Activated T-helper 2 cell treated with anti-CD3 and anti-CD28 coated beads, Interferon-gamma antibody, Interleukin-2, Interleukin-4, amounts not matched to agents 10 μg/mL and 5 μg/mL and 100 μg/mL, durations not matched to agents 14 hours and 24 hours and 36 hours (primary cell): ENCODE measurements at regions of chr2 and their contacts with region 1.

Region 1: GRCh38 chr2:95345566-95346230 is 48.6 kb downstream of the KCNIP3 start:
- DNase-seq: peak; percentile 49
- H3K4me3 Mint-ChIP-seq: peak overlapping the region; percentile 78
- H3K27ac Mint-ChIP-seq: no peak overlapping the region
- H3K4me1 Mint-ChIP-seq: no peaks in the 10 kb centered on the region
- H3K27me3 Mint-ChIP-seq: peaks cover 39% of the 10 kb centered on the region

Region 2: DNA sequence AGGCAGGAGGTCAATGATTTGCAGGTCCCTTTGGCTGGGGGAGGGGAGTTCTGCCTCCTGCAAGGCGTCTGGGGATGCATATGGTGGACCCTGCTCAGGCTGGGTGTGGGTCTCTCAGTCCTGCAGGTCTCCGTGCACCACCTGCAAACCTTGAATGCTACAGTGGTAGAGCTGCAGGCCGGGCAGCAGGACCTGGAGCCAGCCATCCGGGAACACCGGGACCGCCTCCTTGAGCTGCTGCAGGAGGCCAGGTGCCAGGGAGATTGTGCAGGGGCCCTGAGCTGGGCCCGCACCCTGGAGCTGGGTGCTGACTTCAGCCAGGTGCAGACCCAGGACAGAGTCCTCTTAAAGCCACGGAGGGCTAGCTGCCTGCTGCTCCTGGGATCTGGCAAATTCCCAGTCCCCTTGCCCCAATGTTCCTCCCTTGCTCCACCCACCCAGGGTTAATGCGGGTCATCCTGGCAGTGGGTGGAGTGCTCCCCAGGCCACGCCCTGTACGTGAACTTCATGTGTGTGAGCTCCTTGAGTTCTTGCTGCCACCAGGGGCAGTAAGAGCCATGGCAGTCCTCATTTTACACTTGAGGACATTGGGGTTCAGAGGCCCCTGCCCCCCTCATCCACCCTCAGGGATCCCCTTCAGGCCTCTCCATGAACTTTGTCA is 68.3 kb before region 1 on chr2:
- intact Hi-C with region 1: no loop called
- DNase-seq: no peak
- H3K4me3 Mint-ChIP-seq: no peak overlapping the region
- H3K27ac Mint-ChIP-seq: no peak overlapping the region
- H3K4me1 Mint-ChIP-seq: no peaks in the 10 kb centered on the region
- H3K27me3 Mint-ChIP-seq: no peaks in the 10 kb centered on the region

Region 3: DNA sequence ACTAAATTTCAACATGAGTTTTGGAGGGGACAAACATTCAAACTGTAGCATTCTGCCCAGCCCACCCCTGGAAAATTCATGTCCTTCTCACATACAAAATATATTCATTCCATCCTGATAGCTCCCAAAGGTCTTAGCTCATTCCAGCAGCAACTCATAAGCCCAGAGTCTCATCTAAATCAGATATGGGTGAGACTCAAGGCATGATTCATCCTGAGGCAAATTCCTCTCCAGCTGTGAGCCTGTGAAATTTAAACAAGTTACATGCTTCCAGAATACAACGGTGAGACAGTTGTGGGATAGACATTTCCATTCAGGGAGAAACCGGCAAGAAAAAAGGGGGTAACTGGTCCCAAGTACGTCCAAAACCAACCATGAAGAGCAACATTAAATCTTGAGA is 13.3 kb after region 1 on chr2:
- intact Hi-C with region 1: no loop called
- DNase-seq: no peak
- H3K4me3 Mint-ChIP-seq: no peak overlapping the region
- H3K27ac Mint-ChIP-seq: no peak overlapping the region
- H3K4me1 Mint-ChIP-seq: no peaks in the 10 kb centered on the region
- H3K27me3 Mint-ChIP-seq: peaks cover 5% of the 10 kb centered on the region

Region 4: GRCh38 chr2:95402370-95403203 is 56.9 kb after region 1 on chr2 and contains the start of gene FAHD2A:
- intact Hi-C with region 1: loop called (anchors 1 kb)
- DNase-seq: peak; percentile 93
- H3K4me3 Mint-ChIP-seq: peak within 1 kb of the TSS; percentile 99
- H3K27ac Mint-ChIP-seq: peak within 1 kb of the TSS; percentile 96
- H3K4me1 Mint-ChIP-seq: peaks cover 14% of the 10 kb centered on the region
- H3K27me3 Mint-ChIP-seq: no peaks in the 10 kb centered on the region
- total RNA-seq, gene FAHD2A: 32.5 and 40.3 TPM in 2 replicates

Region 5: DNA sequence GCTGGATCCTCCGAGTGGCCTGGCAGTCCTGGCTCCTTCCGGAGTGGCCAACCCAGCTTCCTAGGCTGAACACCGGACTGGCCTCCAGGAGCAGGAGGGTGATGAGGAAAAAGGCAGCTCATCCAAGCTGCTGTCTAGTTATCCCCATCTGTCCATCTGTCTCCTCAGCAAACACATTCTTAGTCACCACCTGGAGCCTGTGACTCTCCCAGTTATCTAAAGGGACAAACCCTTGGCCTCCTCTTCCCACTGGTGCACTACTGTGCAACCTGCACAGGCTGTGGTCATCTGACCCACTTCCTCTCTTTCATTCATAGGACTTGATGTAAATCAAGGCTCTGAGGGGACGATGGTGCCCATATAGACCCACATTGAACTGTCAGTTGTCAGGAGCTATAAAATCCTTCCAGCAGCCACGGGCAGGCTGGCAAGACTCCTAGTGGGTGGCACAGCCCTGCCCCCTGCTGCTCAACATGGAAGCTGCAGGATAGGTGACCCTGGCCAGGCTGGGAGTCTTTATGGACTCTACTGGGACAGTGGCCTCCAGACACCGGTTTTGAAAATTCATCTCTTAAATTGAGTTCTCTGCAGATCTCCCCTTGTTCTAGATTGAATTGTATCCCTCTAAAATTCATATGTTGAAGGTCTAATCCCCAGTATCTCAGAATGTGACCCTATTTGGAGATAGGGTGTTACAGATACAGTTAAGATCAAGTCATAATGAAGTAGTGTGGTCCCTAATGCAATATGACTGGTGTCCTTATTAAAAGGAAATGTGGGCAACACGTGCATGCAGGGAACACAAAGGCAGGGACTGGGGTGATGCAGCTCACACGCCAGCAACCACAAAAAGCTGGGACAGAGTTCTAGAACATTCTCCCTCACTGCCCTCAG is 828.8 kb after region 1 on chr2:
- intact Hi-C with region 1: no loop called
- DNase-seq: peak; percentile 71
- H3K4me3 Mint-ChIP-seq: peak overlapping the region; percentile 7
- H3K27ac Mint-ChIP-seq: no peak overlapping the region
- H3K4me1 Mint-ChIP-seq: peaks cover 15% of the 10 kb centered on the region
- H3K27me3 Mint-ChIP-seq: peaks cover 1% of the 10 kb centered on the region